ENCODE measurements at regions of chr15 and their contacts with region 1.

Region 1: DNA sequence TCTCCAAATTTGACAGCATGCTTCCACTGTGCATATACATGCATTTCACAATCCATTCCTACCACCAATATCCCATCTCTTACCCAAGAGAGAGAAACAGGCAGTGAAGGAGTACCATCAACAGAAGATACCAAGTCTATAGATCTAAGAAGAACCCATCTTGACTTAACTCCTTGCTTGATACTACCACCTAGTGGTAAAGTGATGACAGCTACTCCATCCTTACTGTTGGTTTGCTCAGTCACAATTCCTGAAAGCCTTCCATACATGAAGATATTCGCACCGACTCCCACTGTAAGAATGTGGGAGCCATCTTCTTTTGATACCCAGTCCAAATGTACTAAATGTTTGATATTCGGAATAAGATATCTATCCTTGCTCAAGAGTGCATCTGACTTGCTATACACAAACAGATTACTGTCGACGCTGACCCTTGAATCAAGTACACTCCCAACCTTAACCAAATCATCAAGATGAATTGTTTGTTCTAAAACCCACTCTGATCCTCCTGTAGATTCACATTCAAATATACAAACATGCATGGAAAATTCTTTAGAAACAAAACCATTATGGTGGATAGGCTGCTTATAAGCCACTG is 123.1 kb downstream of the DMXL2 start:
- DNase-seq: no peak
- ATAC-seq: peak; percentile 87
- H3K4me3 ChIP-seq: no peak overlapping the region
- H3K27ac ChIP-seq: no peak overlapping the region
- H3K4me1 ChIP-seq: no peaks in the 10 kb centered on the region
- H3K27me3 ChIP-seq: no peaks in the 10 kb centered on the region
- CTCF ChIP-seq: peak; percentile 60 to 72 (median 68)
- EP300 ChIP-seq: no peak
- POLR2A ChIP-seq: no peak
- RAD21 ChIP-seq: peak; percentile 65

Region 2: GRCh38 chr15:51401872-51402517 is 97.5 kb before region 1 on chr15:
- CTCF ChIA-PET with region 1: interaction called, 14 read pairs
- POLR2A ChIA-PET with region 1: no interaction called
- RAD21 ChIA-PET with region 1: interaction called, 3 read pairs
- SMC1A ChIA-PET with region 1: interaction called, 8 read pairs
- in situ Hi-C with region 1: no loop called
- intact Hi-C with region 1: no loop called
- DNase-seq: no peak
- ATAC-seq: peak; percentile 48; the same call in 2 of the 3 replicates
- H3K4me3 ChIP-seq: no peak overlapping the region
- H3K27ac ChIP-seq: no peak overlapping the region
- H3K4me1 ChIP-seq: no peaks in the 10 kb centered on the region
- H3K27me3 ChIP-seq: peaks cover 3 to 4% of the 10 kb centered on the region in 2 experiments; a peak in 3 of 4 replicates
- CTCF ChIP-seq: peak; percentile 48 to 60 (median 52)
- EP300 ChIP-seq: no peak
- POLR2A ChIP-seq: no peak
- RAD21 ChIP-seq: peak; percentile 56

Region 3: DNA sequence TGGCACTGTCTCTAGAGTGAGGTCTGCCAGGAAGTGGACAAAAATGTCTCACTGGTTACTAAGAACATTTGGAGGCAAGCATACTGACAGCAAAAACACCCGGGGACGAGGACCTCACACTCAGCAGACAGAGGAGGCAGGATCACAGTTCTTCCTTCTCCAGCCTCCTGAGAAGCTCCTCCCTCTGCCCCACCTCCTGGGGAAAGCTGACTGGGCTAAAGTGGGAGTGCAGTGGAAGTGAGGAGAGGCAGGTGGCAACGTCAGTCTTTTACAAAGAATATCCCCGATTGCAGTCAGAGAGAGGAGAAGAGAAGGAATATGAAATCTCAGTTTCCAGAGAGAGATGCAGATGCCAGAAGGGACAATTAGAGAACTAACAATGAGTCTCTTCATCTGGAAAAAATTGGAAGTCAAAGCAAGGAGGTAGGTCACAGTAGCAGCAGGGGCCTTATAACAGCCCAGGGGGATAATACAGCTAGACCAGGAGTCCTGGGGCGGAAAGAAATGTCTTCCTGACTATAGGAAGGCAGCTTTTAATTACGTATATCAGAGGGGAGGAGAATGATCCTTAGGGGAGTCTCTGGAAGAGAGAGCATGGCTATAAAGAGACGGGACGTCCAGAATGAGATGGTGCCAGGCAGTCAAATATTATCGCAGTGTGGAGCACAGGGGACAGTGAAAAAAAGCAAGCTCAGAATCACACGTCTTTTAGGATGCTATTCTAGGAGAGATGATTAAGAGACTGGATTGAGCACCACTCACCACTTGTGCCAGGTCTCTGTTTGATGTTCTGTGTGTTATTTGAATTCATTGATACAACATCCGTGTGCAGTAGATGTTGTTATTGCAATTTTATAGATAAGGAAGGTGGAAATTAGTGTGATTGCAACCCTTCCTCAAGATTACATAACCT is 424.9 kb after region 1 on chr15:
- CTCF ChIA-PET with region 1: no interaction called
- POLR2A ChIA-PET with region 1: no interaction called
- RAD21 ChIA-PET with region 1: no interaction called
- SMC1A ChIA-PET with region 1: no interaction called
- in situ Hi-C with region 1: no loop called
- intact Hi-C with region 1: no loop called
- DNase-seq: no peak
- ATAC-seq: no peak
- H3K4me3 ChIP-seq: no peak overlapping the region
- H3K27ac ChIP-seq: no peak overlapping the region
- H3K4me1 ChIP-seq: no peaks in the 10 kb centered on the region
- H3K27me3 ChIP-seq: no peaks in the 10 kb centered on the region
- CTCF ChIP-seq: no peak
- EP300 ChIP-seq: no peak
- POLR2A ChIP-seq: no peak
- RAD21 ChIP-seq: no peak

Measured in GM12878 (cell line).